Dorsolateral prefrontal cortex (tissue), 120 donors: ENCODE measurements at regions of chrX and their contacts with region 1.

Region 1: DNA sequence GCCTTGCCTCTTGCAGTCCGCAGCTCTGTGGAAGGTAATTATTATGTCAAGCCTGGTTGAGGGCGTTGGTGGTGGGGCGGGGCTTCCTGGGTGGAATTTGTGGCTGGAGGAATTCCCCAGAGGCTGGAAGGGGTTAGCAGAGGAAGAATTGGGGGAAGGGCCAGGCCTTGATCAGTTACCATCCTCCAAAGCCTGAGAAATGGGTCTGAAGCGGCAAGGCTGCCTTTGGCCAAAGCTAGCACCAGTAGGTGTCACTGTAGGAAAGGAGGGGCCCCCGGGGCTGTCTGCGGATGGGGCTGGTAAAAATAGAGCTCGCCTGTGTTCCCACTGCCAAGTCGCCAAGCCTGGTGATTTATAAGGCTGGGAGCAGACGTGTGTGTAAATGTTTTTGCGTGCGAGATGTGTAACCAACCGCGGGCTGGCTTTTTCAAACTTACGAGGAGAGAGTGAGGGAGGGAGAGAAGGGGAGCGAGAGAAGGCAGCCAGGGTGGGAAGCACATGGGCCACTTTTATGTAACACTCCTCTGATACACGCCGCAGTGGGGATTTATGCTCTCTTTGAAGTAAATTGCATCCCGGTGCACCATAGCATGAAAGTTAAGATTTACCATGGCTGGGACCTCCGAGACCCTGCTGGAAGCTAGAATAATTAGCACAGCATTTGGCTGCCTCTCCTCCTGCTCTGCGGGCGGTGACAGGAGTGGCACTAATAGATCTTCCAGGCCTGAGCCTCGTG is 366.9 kb downstream of the BCOR start:
- DNase-seq: peak; percentile 35 to 72 (median 64)
- H3K4me3 ChIP-seq: peak overlapping the region in 14 of 59 donors; percentile 2 to 30 (median 16)
- H3K27ac ChIP-seq: peak overlapping the region in 15 of 59 donors; percentile 1 to 74 (median 56)
- H3K27me3 ChIP-seq: peaks cover 0 to 88% (median 31%) of the 10 kb centered on the region in 45 donors
- CTCF ChIP-seq: peak in 55 of 56 donors; percentile 20 to 74 (median 55)

Region 2: GRCh38 chrX:39652336-39653131 is 78.3 kb before region 1 on chrX:
- intact Hi-C with region 1: loop called in 1 of 2 experiments (anchors 2 kb)
- DNase-seq: no peak
- H3K4me3 ChIP-seq: no peak overlapping the region
- H3K27ac ChIP-seq: peak overlapping the region in 24 of 59 donors; percentile 15 to 90 (median 80)
- H3K27me3 ChIP-seq: peaks cover 0 to 81% (median 27%) of the 10 kb centered on the region in 45 donors
- CTCF ChIP-seq: peak in 53 of 56 donors; percentile 15 to 71 (median 50)

Region 3: DNA sequence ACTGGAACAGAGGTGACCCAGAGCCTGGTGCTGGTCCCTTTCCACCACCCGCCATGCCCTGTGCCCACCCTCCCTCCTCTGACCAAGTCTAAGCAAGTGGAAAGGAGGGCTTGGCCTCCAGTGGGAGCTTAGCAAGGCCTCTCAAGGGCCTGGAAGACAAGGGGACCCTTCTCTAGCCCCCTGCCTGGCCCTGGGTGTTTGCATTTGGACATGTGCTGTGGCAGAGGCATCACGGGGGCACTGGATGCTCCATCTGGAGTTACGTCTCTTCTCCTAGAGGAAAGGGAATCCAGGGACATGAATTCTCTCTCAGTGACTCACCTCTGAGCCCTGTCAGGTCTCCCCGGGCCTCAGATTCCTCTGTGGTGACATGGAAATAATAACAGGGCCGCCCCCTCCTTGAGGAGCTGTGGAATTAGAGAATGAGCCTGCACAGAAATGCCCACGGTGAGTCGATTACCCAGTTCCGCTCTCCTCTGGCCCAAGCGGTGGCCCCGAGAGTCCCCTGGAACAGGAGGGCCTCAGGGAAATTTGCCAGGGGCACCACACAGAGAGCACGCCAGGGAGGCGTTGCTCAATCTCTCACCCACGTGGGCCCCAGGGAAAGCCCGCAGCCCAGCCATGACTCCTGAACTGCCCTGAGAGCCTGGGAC is 177.3 kb after region 1 on chrX:
- intact Hi-C with region 1: loop called in 1 of 2 experiments (anchors 10 kb)
- DNase-seq: peak in 1 of 10 donors; percentile 42
- H3K4me3 ChIP-seq: no peak overlapping the region
- H3K27ac ChIP-seq: no peak overlapping the region
- H3K27me3 ChIP-seq: peaks cover 0 to 86% (median 13%) of the 10 kb centered on the region in 45 donors
- CTCF ChIP-seq: no peak

Region 4: DNA sequence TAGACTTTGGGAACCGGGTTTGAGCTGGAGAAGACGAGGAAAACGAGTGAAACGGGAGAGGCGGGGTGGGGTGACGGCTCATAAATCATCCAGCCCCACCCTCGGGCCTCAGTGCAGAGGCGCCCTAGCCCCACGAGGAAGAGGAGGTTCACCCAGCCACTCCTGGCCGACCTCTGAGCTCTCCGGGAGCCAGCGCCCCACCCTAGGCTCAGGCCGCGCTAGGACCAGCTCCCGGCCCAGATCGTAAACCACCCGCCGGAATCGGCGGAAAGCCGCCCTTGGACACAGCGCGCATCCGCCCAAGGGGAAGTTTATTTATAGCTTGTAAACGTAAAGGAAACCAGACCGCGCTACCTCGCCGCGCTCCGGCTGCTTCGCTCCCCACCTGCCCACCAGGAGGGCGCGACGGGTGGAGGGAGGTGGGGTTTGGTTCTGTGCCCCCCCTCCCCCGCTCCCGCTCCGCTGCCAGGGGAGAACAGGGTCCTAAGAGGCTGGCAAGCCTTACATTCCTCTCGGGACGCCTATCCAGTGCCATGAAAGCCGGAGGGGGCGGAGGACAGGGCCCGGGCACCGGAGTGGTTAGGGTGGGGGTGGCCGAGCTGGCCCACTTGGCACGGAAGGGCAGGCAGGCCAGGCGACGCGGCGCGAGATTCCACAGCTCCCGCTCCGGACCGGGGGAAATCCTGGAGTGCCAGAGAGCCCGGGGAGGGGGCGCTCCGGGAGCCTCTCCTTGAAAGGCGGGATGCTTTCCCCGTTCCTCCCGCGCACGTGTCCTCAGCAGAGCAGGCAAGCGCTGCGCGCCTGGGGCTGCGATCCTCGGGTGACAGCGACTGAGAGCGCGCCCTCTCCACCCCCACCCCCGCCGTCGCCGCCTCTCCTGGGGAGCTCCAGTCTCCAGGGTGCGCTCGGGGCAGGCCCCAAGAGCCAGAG is 282.7 kb after region 1 on chrX:
- intact Hi-C with region 1: loop called in 1 of 2 experiments (anchors 10 kb)
- DNase-seq: peak in 8 of 10 donors; percentile 18 to 71 (median 55)
- H3K4me3 ChIP-seq: peak overlapping the region; percentile 23 to 71 (median 56)
- H3K27ac ChIP-seq: peak overlapping the region in 56 of 59 donors; percentile 41 to 89 (median 81)
- H3K27me3 ChIP-seq: peaks cover 0 to 88% (median 37%) of the 10 kb centered on the region in 45 donors
- CTCF ChIP-seq: peak in 1 of 56 donors; percentile 14

Region 5: GRCh38 chrX:40097497-40098263 is 366.9 kb after region 1 on chrX and contains the start of gene BCOR:
- intact Hi-C with region 1: loop called in 1 of 2 experiments (anchors 10 kb)
- DNase-seq: peak in 8 of 10 donors; percentile 38 to 75 (median 58)
- H3K4me3 ChIP-seq: peak within 1 kb of the TSS; percentile 49 to 87 (median 72)
- H3K27ac ChIP-seq: peak within 1 kb of the TSS; percentile 29 to 94 (median 87)
- H3K27me3 ChIP-seq: peaks cover 0 to 98% (median 69%) of the 10 kb centered on the region in 45 donors
- CTCF ChIP-seq: peak in 13 of 56 donors; percentile 7 to 35 (median 18)
- total RNA-seq, gene BCOR: 10.5 to 38.3 (median 19.7) TPM

Region 6: DNA sequence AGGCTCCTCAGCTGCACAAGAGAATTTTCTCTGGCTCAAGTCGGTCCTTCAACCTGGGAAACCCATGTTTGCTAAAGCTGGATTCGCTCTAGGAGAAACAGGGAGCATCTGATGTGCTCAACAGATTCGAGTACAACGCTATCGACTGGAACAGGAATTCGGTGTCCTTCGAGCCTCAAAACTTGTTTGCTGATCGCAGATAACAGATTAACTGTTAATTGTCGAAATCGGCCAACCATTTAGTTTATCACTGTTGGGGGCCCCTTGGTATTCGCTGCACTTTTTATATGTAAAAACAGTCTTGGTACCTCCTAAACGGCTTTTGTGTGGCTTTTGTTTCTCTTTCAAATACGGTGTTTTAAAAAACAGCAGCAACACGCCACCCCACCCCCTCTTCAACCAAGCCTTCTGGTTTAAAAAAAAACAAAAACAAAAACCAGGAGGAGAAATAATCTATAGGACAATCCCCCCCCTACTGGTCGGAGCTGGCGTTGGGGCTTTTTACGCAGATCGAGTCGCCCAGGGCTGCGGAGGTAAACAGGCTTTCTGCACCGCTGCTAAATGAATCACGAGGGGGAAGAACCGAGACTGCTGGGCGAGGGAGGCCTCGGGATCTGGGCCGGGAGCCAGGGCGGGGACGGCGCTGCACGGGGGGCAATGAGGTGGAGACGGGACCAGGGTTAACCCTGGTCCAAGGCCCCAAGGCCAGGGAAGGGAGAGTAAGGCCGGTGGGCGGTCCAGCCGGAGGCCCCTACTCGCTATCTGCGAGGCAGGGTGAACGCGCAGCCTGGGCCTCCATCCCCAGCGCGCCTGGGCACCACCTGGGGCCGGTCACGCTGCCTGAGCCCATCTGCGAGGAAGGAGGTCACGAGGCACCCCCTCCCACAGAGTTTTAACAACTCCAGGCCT is 438.6 kb after region 1 on chrX:
- intact Hi-C with region 1: loop called in 1 of 2 experiments (anchors 5 kb)
- DNase-seq: peak in 2 of 10 donors; percentile 29 to 44
- H3K4me3 ChIP-seq: no peak overlapping the region
- H3K27ac ChIP-seq: peak overlapping the region in 1 of 59 donors; percentile 14
- H3K27me3 ChIP-seq: peaks cover 0 to 100% (median 74%) of the 10 kb centered on the region in 45 donors
- CTCF ChIP-seq: peak in 16 of 56 donors; percentile 5 to 39 (median 19)

Region 7: DNA sequence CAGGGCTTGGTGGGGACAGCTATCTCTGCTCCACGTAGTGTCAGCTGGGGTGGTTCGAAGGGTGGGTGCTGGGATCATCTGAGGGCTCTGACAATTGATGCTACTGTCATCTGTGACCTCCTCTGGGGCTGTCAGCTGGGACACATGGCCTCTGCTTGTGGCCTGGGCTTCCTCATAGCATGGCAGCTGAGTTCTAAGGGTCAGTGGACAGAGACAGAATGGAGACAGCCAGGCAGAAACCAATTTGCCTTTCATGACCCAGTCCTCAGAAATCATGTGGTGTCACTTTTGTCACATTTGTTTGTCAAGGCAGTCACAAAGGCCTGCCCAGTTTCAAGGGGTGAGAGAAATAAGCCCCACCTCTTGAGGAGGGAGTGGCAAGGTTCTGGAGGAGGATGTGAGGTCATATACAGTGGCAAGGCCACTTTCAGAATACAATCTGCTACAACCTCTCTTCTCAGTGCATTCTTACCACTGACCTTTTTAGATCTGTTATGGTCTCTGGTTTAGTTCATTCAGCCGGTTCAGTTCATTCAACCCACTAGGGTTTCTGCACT is 470.6 kb after region 1 on chrX:
- intact Hi-C with region 1: no loop called
- DNase-seq: no peak
- H3K4me3 ChIP-seq: no peak overlapping the region
- H3K27ac ChIP-seq: no peak overlapping the region
- H3K27me3 ChIP-seq: peaks cover 0 to 58% (median 13%) of the 10 kb centered on the region in 45 donors
- CTCF ChIP-seq: no peak